ENCODE measurements at regions of chr17 and their contacts with region 1.

Region 1: GRCh38 chr17:78013683-78014467 is 55.4 kb downstream of the TNRC6C start:
- DNase-seq: peak in 13 of 14 experiments; percentile 6 to 84 (median 42)
- ATAC-seq: peak; percentile 75
- H3K4me3 ChIP-seq: no peak overlapping the region
- H3K4me3 Mint-ChIP-seq: no peak overlapping the region
- H3K27ac ChIP-seq: no peak overlapping the region
- H3K27ac Mint-ChIP-seq: peak overlapping the region; percentile 34
- H3K4me1 ChIP-seq: peaks cover 4% of the 10 kb centered on the region
- H3K4me1 Mint-ChIP-seq: peaks cover 47% of the 10 kb centered on the region
- H3K27me3 ChIP-seq: no peaks in the 10 kb centered on the region
- H3K27me3 Mint-ChIP-seq: no peaks in the 10 kb centered on the region
- CTCF ChIP-seq: peak; percentile 88

Region 2: GRCh38 chr17:77542551-77543490 is 471.1 kb before region 1 on chr17:
- CTCF ChIA-PET with region 1: interaction called, 9 read pairs
- POLR2A ChIA-PET with region 1: no interaction called
- intact Hi-C with region 1: loop called (anchors 1 kb)
- DNase-seq: peak; percentile 45 to 80 (median 56)
- ATAC-seq: peak; percentile 93
- H3K4me3 ChIP-seq: no peak overlapping the region
- H3K4me3 Mint-ChIP-seq: no peak overlapping the region
- H3K27ac ChIP-seq: no peak overlapping the region
- H3K27ac Mint-ChIP-seq: no peak overlapping the region
- H3K4me1 ChIP-seq: peaks cover 6% of the 10 kb centered on the region
- H3K4me1 Mint-ChIP-seq: no peaks in the 10 kb centered on the region
- H3K27me3 ChIP-seq: no peaks in the 10 kb centered on the region
- H3K27me3 Mint-ChIP-seq: peaks cover 7% of the 10 kb centered on the region
- CTCF ChIP-seq: peak; percentile 88

Region 3: GRCh38 chr17:77772461-77772897 is 241.4 kb before region 1 on chr17:
- CTCF ChIA-PET with region 1: interaction called, 5 read pairs
- POLR2A ChIA-PET with region 1: no interaction called
- intact Hi-C with region 1: loop called (anchors 1 kb)
- DNase-seq: peak; percentile 43 to 81 (median 64)
- ATAC-seq: peak; percentile 98
- H3K4me3 ChIP-seq: no peak overlapping the region
- H3K4me3 Mint-ChIP-seq: no peak overlapping the region
- H3K27ac ChIP-seq: no peak overlapping the region
- H3K27ac Mint-ChIP-seq: no peak overlapping the region
- H3K4me1 ChIP-seq: peaks cover 11% of the 10 kb centered on the region
- H3K4me1 Mint-ChIP-seq: peaks cover 14% of the 10 kb centered on the region
- H3K27me3 ChIP-seq: no peaks in the 10 kb centered on the region
- H3K27me3 Mint-ChIP-seq: no peaks in the 10 kb centered on the region
- CTCF ChIP-seq: peak; percentile 71

Region 4: GRCh38 chr17:77924757-77925336 is 89.0 kb before region 1 on chr17:
- CTCF ChIA-PET with region 1: no interaction called
- POLR2A ChIA-PET with region 1: no interaction called
- intact Hi-C with region 1: no loop called
- DNase-seq: no peak
- ATAC-seq: no peak
- H3K4me3 ChIP-seq: no peak overlapping the region
- H3K4me3 Mint-ChIP-seq: no peak overlapping the region
- H3K27ac ChIP-seq: no peak overlapping the region
- H3K27ac Mint-ChIP-seq: no peak overlapping the region
- H3K4me1 ChIP-seq: peaks cover 18% of the 10 kb centered on the region
- H3K4me1 Mint-ChIP-seq: peaks cover 30% of the 10 kb centered on the region
- H3K27me3 ChIP-seq: no peaks in the 10 kb centered on the region
- H3K27me3 Mint-ChIP-seq: peaks cover 1% of the 10 kb centered on the region
- CTCF ChIP-seq: no peak

Region 5: GRCh38 chr17:77963441-77963840 is 50.4 kb before region 1 on chr17:
- CTCF ChIA-PET with region 1: interaction called, 13 read pairs
- POLR2A ChIA-PET with region 1: interaction called, 56 read pairs
- intact Hi-C with region 1: loop called in 1 of 2 experiments (anchors 5 kb)
- DNase-seq: peak; percentile 30 to 85 (median 45)
- ATAC-seq: peak; percentile 62
- H3K4me3 ChIP-seq: peak overlapping the region; percentile 0
- H3K4me3 Mint-ChIP-seq: peak overlapping the region; percentile 87
- H3K27ac ChIP-seq: no peak overlapping the region
- H3K27ac Mint-ChIP-seq: peak overlapping the region; percentile 76
- H3K4me1 ChIP-seq: peaks cover 56% of the 10 kb centered on the region
- H3K4me1 Mint-ChIP-seq: peaks cover 80% of the 10 kb centered on the region
- H3K27me3 ChIP-seq: no peaks in the 10 kb centered on the region
- H3K27me3 Mint-ChIP-seq: no peaks in the 10 kb centered on the region
- CTCF ChIP-seq: no peak